Activated CD4-positive, alpha-beta T cell treated with anti-CD3 and anti-CD28 coated beads for 36 hours (primary cell): ENCODE measurements at regions of chr12 and their contacts with region 1.

Region 1: DNA sequence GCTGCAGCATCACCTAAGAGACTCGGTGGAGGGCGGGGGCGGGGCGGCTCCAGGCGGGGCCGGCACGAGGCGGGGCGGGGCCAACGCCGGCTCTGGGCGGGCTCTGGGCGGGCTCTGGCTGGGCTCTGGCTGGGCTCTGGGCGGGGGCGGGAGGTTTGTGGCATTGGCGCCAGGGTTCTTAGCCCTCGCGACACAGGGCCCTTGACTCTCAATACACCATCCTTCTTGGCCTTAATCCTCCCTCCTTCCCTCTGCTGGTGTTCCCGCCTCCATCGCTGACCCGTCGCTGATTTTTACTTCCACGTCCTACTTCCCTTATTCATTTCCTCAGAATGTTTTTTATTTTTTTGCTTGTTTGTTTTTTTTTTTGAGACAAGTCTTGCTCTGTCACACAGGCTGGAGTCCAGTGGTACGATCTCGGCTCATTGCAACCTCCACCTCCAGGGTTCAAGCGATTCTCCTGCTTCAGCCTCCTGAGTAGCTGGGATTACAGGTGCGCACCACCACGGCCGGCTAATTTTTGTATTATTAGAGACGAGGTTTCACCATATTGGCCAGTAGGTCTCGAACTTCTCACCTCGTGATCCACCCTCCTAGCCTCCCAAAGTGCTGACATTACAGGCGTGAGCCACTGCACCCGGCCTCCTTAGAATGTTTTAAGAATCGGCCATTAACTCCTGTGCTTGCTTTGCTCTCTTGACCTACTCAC is at the start of gene BLTP3B:
- DNase-seq: peak; percentile 96
- ATAC-seq: peak; percentile 82
- H3K4me3 Mint-ChIP-seq: peak within 1 kb of the TSS; percentile 94
- H3K27ac Mint-ChIP-seq: peak within 1 kb of the TSS; percentile 97
- H3K4me1 Mint-ChIP-seq: peaks cover 33% of the 10 kb centered on the region
- H3K27me3 Mint-ChIP-seq: no peaks in the 10 kb centered on the region
- total RNA-seq, gene BLTP3B: 39.5 to 48.7 TPM

Region 2: GRCh38 chr12:98503592-98504367 is 1639.2 kb before region 1 on chr12:
- CTCF ChIA-PET with region 1: no interaction called
- POLR2A ChIA-PET with region 1: no interaction called
- intact Hi-C with region 1: loop called in 1 of 2 experiments (anchors 5 kb)
- DNase-seq: peak; percentile 98
- ATAC-seq: peak; percentile 85
- H3K4me3 Mint-ChIP-seq: peak overlapping the region; percentile 84
- H3K27ac Mint-ChIP-seq: peak overlapping the region; percentile 99
- H3K4me1 Mint-ChIP-seq: peaks cover 37% of the 10 kb centered on the region
- H3K27me3 Mint-ChIP-seq: peaks cover 2% of the 10 kb centered on the region

Region 3: GRCh38 chr12:98644711-98645402 is 1498.1 kb before region 1 on chr12 and contains the starts of genes APAF1 and IKBIP:
- CTCF ChIA-PET with region 1: no interaction called
- POLR2A ChIA-PET with region 1: no interaction called
- intact Hi-C with region 1: loop called in 1 of 2 experiments (anchors 2 kb)
- DNase-seq: peak; percentile 98
- ATAC-seq: peak; percentile 92
- H3K4me3 Mint-ChIP-seq: peak within 1 kb of the TSS; percentile 91
- H3K27ac Mint-ChIP-seq: peak within 1 kb of the TSS; percentile 94
- H3K4me1 Mint-ChIP-seq: peaks cover 16% of the 10 kb centered on the region
- H3K27me3 Mint-ChIP-seq: no peaks in the 10 kb centered on the region
- total RNA-seq, gene APAF1: 16.5 to 17.4 TPM
- total RNA-seq, gene IKBIP: 20.1 to 27.0 TPM

Region 4: GRCh38 chr12:100101000-100101399 is 42.0 kb before region 1 on chr12:
- CTCF ChIA-PET with region 1: interaction called, 3 read pairs
- POLR2A ChIA-PET with region 1: no interaction called
- intact Hi-C with region 1: loop called in 1 of 2 experiments (anchors 1 kb)
- DNase-seq: no peak
- ATAC-seq: peak; percentile 60
- H3K4me3 Mint-ChIP-seq: no peak overlapping the region
- H3K27ac Mint-ChIP-seq: no peak overlapping the region
- H3K4me1 Mint-ChIP-seq: peaks cover 10% of the 10 kb centered on the region
- H3K27me3 Mint-ChIP-seq: no peaks in the 10 kb centered on the region

Region 5: DNA sequence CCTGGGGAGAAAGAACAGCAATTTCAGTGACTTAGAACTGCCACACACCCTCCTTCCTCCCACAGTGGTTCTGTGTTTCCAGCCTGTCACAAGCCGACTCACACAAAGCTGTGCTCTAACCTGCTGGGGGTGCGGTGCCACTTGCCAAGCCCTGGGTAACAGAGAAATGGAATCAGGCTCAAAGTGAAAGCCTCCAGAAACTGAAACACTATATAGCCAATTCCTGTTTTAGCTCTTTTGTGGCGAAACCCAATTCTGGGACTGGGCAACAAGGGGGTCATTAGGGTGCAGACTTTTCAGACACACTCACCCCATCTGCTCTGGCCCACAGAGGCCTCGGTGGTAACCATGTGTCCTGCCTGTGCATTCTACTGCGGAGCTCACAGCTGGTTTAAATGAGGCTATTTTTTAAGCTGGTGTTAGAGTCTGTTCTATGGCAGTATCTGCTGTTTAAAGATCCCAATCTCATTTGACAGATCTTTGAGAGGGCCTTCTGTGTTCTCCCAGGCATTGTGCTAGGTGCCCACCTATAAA is 42.4 kb after region 1 on chr12:
- CTCF ChIA-PET with region 1: no interaction called
- POLR2A ChIA-PET with region 1: no interaction called
- intact Hi-C with region 1: no loop called
- DNase-seq: peak; percentile 49
- ATAC-seq: peak; percentile 89
- H3K4me3 Mint-ChIP-seq: no peak overlapping the region
- H3K27ac Mint-ChIP-seq: no peak overlapping the region
- H3K4me1 Mint-ChIP-seq: peaks cover 5% of the 10 kb centered on the region
- H3K27me3 Mint-ChIP-seq: no peaks in the 10 kb centered on the region

Region 6: GRCh38 chr12:100200463-100201181 is 57.6 kb after region 1 on chr12 and contains the start of gene ACTR6:
- CTCF ChIA-PET with region 1: interaction called, 5 read pairs
- POLR2A ChIA-PET with region 1: interaction called, 6 read pairs
- intact Hi-C with region 1: loop called (anchors 1 kb)
- DNase-seq: peak; percentile 98
- ATAC-seq: peak; percentile 84
- H3K4me3 Mint-ChIP-seq: peak within 1 kb of the TSS; percentile 93
- H3K27ac Mint-ChIP-seq: peak within 1 kb of the TSS; percentile 100
- H3K4me1 Mint-ChIP-seq: peaks cover 26% of the 10 kb centered on the region
- H3K27me3 Mint-ChIP-seq: no peaks in the 10 kb centered on the region
- total RNA-seq, gene ACTR6: 21.6 to 37.3 TPM

Region 7: DNA sequence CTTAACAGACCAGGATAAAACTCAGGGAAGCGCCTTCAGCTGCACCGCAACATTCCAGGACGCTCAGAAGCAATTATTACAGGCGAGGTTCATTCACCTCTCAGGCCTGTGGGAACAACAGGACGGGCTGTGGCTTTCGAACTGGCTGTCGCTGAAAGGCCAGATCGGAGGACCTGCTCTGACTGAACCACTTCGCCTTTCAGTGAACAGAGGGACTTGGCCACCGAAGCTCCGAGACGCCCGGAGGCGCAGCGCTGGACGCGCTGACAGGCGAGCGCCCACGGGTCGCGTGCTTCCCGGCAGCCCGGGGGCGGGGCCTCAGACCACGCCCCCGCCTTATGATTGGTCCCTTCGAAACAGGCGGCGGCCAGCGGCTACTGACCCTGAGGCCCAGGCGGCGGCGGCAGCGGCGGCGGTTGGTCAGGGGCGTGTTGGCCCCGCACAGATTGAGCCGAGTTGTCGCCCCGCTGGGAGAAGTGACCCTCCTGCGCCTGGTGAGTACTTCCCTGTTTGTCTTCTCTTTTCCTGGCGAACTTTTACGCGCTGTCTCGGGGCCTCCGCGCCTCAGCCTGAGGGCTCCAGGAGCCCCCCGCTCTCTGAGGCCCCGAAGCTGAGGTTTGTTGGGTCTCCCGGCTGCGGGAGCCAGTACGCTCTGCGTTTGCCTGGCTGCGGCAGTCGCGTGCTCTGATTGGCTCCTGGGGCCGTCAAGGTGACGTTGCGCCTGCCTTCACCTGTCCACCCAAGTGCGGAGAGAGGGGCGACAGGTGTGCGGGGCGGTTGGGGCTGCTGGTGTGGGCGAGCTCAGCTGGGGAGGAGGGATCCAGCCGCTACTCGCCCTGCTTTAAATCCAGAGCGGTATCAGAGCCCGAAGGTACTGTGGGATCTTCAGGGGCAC is 430.5 kb after region 1 on chr12 and contains the start of gene GAS2L3:
- CTCF ChIA-PET with region 1: no interaction called
- POLR2A ChIA-PET with region 1: no interaction called
- intact Hi-C with region 1: loop called in 1 of 2 experiments (anchors 1 kb)
- DNase-seq: peak; percentile 80
- ATAC-seq: peak; percentile 92
- H3K4me3 Mint-ChIP-seq: peak within 1 kb of the TSS; percentile 88
- H3K27ac Mint-ChIP-seq: peak within 1 kb of the TSS; percentile 87
- H3K4me1 Mint-ChIP-seq: peaks cover 16% of the 10 kb centered on the region
- H3K27me3 Mint-ChIP-seq: peaks cover 29% of the 10 kb centered on the region
- total RNA-seq, gene GAS2L3: 2.6 to 3.9 TPM

Region 8: GRCh38 chr12:101280006-101280505 is 1137.1 kb after region 1 on chr12 and contains the start of gene UTP20:
- CTCF ChIA-PET with region 1: no interaction called
- POLR2A ChIA-PET with region 1: no interaction called
- intact Hi-C with region 1: loop called in 1 of 2 experiments (anchors 5 kb)
- DNase-seq: peak; percentile 97
- ATAC-seq: peak; percentile 100
- H3K4me3 Mint-ChIP-seq: peak within 1 kb of the TSS; percentile 93
- H3K27ac Mint-ChIP-seq: peak within 1 kb of the TSS; percentile 85
- H3K4me1 Mint-ChIP-seq: peaks cover 17% of the 10 kb centered on the region
- H3K27me3 Mint-ChIP-seq: peaks cover 9% of the 10 kb centered on the region
- total RNA-seq, gene UTP20: 29.4 to 33.1 TPM